Uterus (tissue), 4 donors: ENCODE measurements at regions of chr14 and their contacts with region 1.

Region 1: DNA sequence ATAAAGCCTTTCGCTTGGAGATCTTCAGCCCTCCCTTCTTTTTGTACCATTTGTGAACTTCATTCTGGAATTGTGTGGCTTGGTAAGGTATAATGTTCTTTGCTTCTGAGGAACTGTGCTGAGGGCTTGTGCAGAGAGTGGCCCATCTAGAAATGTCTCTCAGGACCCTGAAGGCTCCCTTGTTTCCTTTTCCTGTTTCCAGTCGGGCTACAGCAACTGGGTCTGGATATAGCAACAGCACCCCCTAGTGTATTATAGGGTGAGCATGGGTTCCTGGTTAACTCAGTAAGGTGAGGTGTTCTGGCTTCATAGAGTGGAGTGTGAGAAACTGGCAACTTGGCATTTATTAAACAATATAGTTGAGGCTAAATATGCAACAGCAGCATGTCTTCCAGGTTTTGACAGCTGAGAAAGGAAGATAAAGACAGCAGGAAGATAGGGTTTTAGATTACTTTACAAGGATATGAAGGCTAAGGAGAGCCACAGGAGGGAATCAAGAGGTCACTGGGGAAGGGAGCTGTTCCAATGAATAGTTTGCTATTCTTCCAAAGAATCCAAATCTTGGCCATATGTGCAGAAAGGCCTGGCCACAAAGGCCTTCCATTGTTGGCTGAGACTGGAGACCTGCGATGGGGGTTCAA is 49.1 kb upstream of the RNU6-8 start:
- DNase-seq: peak in 1 of 2 donors; percentile 63
- H3K4me3 ChIP-seq: no peak overlapping the region
- H3K27ac ChIP-seq: no peak overlapping the region
- H3K4me1 ChIP-seq: no peaks in the 10 kb centered on the region
- H3K27me3 ChIP-seq: no peaks in the 10 kb centered on the region
- CTCF ChIP-seq: peak; percentile 78 to 86 (median 80)
- POLR2A ChIP-seq: no peak

Region 2: DNA sequence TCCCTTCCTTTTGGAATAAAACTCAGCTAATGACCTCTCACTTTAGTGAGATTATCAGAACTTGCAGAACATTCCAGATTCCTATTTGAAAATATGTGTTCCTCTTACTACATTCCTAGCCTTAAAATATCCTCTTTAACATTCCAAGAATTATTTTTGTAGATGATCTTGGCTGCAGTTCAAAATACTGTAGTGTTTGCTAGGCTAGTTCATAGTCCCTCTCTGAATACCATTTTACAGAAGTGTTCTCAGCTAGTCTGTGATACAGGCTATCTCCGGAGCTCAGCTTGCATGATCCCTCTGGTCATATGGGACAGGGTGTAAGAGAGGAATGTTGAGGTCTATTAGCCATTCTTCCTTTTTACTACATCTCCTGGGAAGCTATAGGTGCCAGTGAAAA is 746.7 kb before region 1 on chr14:
- intact Hi-C with region 1: loop called (anchors 10 kb)
- DNase-seq: no peak
- H3K4me3 ChIP-seq: no peak overlapping the region
- H3K27ac ChIP-seq: no peak overlapping the region
- H3K4me1 ChIP-seq: peaks cover 0 to 4% of the 10 kb centered on the region in 2 donors
- H3K27me3 ChIP-seq: no peaks in the 10 kb centered on the region
- CTCF ChIP-seq: no peak
- POLR2A ChIP-seq: no peak